Activated naive CD4-positive, alpha-beta T cell treated with anti-CD3 and anti-CD28 coated beads for 36 hours (primary cell): ENCODE measurements at regions of chrX and their contacts with region 1.

Region 1: DNA sequence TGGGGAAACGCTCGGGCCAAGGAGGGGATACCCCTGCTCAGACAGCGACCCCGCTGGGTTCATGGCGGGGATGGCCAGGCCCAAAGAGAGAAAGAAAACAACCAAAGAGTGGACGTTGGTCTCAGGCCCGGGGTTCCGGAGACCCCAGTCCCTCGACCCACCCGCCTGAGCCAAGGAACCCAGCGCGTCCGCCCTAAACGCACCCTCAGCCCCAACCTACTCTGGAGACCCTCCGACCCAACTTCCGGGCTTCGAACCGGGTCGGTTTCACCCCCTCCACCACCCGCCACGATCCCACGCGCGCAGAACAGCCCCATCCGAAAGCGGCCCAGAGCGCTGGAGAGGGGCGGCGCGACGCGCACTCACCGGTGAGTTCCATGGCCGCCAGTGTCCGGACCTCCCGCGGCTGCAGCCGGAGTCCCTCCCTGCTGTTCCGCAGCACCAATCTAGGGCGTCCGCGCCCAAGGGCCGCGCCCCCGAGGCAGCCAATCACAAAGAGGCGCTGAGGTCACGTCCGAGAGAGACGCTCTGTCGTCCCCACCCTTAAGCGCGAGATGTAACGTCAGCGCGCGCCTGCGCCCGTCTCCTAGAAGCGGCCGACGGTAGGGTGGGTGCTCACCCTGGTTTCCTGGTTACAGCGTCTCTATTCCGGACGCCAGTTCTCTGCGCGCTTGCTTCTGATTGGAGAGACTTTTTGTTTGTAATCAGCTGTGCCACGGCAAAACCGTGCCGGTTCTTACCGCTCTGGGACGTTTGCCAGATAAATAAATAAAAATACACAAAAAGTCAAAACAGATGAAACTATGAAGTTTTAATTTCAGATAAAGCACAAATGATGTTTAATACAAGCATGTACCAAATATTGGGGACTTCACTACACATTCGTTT is at the start of gene PIGA:
- DNase-seq: peak; percentile 94
- H3K4me3 Mint-ChIP-seq: peak within 1 kb of the TSS; percentile 89
- H3K27ac Mint-ChIP-seq: peak within 1 kb of the TSS; percentile 87
- H3K4me1 Mint-ChIP-seq: peaks cover 12% of the 10 kb centered on the region
- H3K27me3 Mint-ChIP-seq: no peaks in the 10 kb centered on the region
- total RNA-seq, gene PIGA: 26.8 to 28.4 TPM

Region 2: DNA sequence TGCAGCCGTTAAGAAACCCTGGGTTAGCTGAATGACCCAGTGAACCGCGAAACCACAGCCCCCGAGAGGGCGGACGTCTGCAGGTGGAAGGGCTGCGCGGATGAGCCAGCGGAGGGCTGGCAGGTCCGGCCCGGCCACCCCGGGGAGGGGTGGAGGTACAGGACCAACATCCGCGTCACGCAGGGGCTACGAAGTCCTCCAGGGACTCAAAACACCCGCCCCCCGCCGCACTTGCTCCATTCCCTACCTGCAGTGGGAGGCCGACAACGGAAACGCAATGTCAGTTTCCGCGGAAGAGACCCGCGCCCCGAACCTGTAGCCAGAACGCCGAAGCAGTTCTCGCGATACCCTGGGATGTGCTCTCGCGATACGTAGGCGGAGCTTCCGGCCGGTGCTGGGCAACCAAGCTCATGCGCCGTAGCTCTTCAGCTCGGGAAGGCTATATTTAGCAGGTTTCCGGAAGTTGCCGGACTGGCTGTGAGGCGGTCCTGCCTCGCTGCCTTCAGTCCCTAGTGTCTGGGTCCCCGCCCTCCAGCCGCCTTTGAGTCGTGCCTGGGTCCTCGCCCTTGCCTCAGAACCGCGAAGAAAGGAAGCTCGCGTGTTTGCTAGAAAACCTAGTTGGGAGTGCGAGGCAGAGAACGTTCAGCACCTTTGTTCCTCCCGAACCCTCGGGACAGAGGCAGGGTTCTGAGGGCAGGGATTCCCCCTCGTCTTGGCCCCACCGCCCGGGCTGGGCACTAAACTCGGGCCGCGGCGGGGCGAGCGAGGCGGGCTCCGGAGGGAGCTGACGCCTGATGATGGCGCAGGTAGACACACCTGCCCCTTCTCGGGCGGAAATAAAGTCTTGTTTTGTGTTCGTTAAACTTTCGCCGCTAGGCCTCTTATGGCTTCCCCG is 1600.9 kb before region 1 on chrX and contains the starts of genes OFD1 and TRAPPC2:
- CTCF ChIA-PET with region 1: no interaction called
- intact Hi-C with region 1: loop called (anchors 1 kb)
- DNase-seq: peak; percentile 92
- H3K4me3 Mint-ChIP-seq: peak within 1 kb of the TSS; percentile 95
- H3K27ac Mint-ChIP-seq: peak within 1 kb of the TSS; percentile 92
- H3K4me1 Mint-ChIP-seq: peaks cover 43% of the 10 kb centered on the region
- H3K27me3 Mint-ChIP-seq: no peaks in the 10 kb centered on the region
- total RNA-seq, gene OFD1: 25.3 to 26.2 TPM
- total RNA-seq, gene TRAPPC2: 9.6 to 10.7 TPM

Region 3: DNA sequence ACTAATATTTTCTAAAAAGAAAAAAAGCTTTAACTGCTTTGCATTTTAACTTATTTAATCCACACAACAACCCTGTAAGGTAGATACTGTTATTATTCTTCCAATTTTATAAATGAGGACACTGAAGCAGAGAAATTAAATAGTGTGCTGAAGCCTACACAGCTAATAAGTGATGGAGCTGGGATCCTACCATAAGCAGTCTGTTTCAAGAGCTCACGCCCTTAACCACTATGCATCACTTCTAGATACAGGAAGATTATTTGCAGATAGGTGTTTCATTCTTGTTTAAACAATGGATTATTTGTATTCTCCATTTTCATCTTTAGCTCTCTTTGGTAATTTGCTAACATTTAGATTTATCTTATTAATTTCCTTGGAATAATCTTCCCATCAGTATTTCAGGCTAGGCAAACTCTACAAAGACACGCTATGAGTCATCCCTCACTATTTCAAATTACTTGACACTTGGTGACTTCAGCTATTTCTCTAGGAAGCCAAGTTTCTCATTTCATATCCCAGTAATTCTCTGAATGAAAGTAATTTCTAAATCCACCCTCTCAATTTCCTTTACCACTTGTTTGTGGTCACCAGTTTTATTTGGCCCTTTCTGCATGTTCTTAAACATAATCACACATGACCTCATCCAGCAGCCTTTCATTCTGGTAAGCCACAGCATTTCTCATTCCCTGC is 132.8 kb before region 1 on chrX:
- CTCF ChIA-PET with region 1: no interaction called
- intact Hi-C with region 1: loop called (anchors 5 kb)
- DNase-seq: no peak
- H3K4me3 Mint-ChIP-seq: no peak overlapping the region
- H3K27ac Mint-ChIP-seq: no peak overlapping the region
- H3K4me1 Mint-ChIP-seq: peaks cover 37% of the 10 kb centered on the region
- H3K27me3 Mint-ChIP-seq: no peaks in the 10 kb centered on the region

Region 4: DNA sequence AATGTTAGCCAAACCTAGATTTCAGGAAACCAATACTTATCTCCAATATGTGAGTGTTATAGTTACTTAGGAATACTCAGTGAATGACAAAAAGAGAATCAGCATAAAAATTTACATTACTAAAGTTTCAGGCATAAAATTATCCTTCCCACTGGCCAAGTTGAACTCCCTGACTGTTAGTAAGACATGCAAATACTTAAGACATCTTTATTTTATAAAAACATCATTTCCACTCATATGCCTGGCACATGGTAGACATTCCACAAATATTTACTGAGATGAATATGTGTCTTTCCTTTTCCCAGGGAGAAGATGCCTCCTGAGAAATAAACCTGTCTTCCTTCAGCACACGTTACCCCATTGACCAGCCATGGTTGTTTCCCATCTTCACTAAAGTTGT is 41.6 kb after region 1 on chrX:
- CTCF ChIA-PET with region 1: no interaction called
- intact Hi-C with region 1: no loop called
- DNase-seq: no peak
- H3K4me3 Mint-ChIP-seq: no peak overlapping the region
- H3K27ac Mint-ChIP-seq: no peak overlapping the region
- H3K4me1 Mint-ChIP-seq: no peaks in the 10 kb centered on the region
- H3K27me3 Mint-ChIP-seq: no peaks in the 10 kb centered on the region

Region 5: DNA sequence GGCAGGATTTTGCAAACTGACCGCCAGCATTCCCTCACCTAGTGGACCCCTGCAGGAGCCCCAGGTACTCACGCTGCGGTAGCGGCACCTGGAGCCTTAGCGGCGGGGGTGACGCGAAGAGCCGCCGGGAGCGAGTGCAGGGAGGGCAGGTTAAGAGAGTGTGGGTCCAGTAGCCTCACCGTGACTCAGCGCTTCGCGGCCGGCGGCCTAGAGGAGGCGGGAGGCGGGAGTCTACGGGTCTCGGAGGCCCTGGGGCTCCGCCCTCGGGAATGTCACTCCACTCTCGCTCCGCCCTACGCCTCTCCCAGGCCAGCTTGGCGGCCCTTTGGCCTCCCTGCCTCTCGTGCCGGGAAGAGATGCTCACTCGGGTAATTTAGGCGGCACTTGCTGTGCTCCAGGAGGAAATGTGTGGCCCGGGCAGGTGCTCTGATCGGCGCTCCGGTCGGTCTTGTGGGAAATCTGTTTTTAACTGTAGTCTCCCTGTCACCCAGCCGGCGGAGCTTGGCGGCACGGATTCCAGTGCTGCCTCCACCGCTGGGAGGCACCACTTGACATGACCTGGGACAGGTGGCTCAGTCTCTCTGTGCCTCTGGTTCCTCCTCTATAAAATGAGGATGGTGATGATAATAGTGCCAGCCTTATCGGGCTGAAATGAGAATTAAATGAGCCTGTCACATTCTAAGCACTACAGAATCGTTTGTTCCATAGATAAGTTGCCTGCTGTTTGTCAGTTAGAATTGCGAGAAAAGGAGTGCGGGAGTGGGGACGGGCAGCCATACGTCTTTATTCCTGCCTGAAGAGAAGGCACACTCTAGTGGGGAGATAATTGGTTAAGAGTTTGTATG is 158.0 kb after region 1 on chrX and contains the start of gene PIR:
- CTCF ChIA-PET with region 1: no interaction called
- intact Hi-C with region 1: loop called (anchors 1 kb)
- DNase-seq: peak; percentile 75
- H3K4me3 Mint-ChIP-seq: peak within 1 kb of the TSS; percentile 83
- H3K27ac Mint-ChIP-seq: peak within 1 kb of the TSS; percentile 68
- H3K4me1 Mint-ChIP-seq: peaks cover 6% of the 10 kb centered on the region
- H3K27me3 Mint-ChIP-seq: no peaks in the 10 kb centered on the region
- total RNA-seq, gene PIR: 6.2 to 9.2 TPM

Region 6: GRCh38 chrX:15749642-15750610 is 414.5 kb after region 1 on chrX:
- CTCF ChIA-PET with region 1: no interaction called
- intact Hi-C with region 1: loop called (anchors 2 kb)
- DNase-seq: peak; percentile 31
- H3K4me3 Mint-ChIP-seq: peak overlapping the region; percentile 47
- H3K27ac Mint-ChIP-seq: peak overlapping the region; percentile 92
- H3K4me1 Mint-ChIP-seq: peaks cover 68% of the 10 kb centered on the region
- H3K27me3 Mint-ChIP-seq: no peaks in the 10 kb centered on the region

Region 7: DNA sequence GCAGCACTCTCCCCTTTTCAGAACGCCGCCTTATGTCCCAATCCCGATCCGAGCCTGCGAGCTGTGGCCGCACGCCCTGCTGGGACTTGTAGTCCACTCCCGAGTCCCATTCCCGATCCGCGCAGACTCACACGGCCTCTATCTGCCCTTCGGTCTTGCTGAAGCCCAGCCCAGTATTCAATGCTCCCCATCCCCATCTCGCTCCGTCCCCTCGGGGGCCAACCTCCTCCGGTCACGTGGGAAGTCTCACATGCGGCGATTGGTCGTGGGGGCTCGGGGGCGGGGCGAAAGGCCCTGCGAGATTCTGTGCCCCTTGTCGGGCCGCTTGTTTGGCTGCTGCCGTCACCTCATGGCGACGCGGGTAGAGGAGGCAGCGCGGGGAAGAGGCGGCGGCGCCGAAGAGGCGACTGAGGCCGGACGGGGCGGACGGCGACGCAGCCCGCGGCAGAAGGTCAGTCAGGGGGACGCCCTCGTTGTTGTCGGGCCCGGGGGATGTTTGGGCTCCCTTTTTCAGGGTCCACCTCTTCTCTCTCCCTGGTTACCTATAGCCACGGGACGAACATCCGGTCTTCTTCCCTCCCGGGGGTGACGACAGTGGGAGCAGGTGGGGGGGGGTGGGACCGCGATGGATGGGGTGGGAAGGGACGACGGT is 1450.9 kb after region 1 on chrX and contains the start of gene TXLNG:
- CTCF ChIA-PET with region 1: no interaction called
- intact Hi-C with region 1: loop called (anchors 5 kb)
- DNase-seq: peak; percentile 95
- H3K4me3 Mint-ChIP-seq: peak within 1 kb of the TSS; percentile 83
- H3K27ac Mint-ChIP-seq: peak within 1 kb of the TSS; percentile 72
- H3K4me1 Mint-ChIP-seq: peaks cover 9% of the 10 kb centered on the region
- H3K27me3 Mint-ChIP-seq: no peaks in the 10 kb centered on the region
- total RNA-seq, gene TXLNG: 11.8 to 12.3 TPM